IMR-90 (cell line): ENCODE measurements at regions of chr7 and their contacts with region 1.

Region 1: GRCh38 chr7:33904681-33905388 is 504 bp upstream of the BMPER start:
- DNase-seq: peak; percentile 59
- ATAC-seq: peak; percentile 82
- H3K4me3 ChIP-seq: peak overlapping the region; percentile 70
- H3K27ac ChIP-seq: peak overlapping the region; percentile 74
- H3K4me1 ChIP-seq: peaks cover 4% of the 10 kb centered on the region; the same call in 1 of the 2 replicates
- H3K27me3 ChIP-seq: no peaks in the 10 kb centered on the region
- CTCF ChIP-seq: peak; percentile 36
- POLR2A ChIP-seq: no peak
- RAD21 ChIP-seq: no peak

Region 2: DNA sequence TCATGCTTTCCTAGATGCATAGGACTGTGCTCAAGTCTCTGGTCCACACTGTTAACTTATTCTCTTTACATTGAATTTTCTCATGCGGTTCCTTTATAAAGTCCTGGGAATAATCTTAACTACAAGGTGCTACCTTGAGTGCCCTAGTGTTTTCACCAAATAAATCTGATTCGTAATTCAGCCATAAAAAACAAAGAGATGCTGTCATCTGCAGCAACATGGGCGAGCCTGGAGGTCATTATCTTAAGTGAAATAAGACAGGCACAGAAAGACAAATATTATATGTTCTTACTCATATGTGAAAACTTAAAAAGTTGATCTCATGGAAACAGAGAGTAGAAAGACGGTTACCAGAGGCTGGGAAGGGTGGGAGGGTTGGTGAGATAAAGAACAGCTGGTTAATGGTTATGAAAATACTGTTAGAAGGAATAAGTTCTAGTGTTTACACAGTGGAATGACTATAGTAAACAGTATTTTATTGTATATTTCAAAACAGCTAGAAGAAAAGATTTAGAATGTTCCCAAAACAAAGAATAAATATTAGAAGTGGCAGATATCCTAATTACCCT is 880.6 kb before region 1 on chr7:
- CTCF ChIA-PET with region 1: no interaction called
- POLR2A ChIA-PET with region 1: interaction called, 11 read pairs
- dilution Hi-C with region 1: no loop called
- in situ Hi-C with region 1: no loop called
- intact Hi-C with region 1: no loop called
- DNase-seq: peak; percentile 77
- ATAC-seq: peak; percentile 97
- H3K4me3 ChIP-seq: no peak overlapping the region
- H3K27ac ChIP-seq: peak overlapping the region; percentile 9; the same call in 1 of the 2 replicates
- H3K4me1 ChIP-seq: 0 out of 2 replicates have a peak, but pooled peaks cover 3% of the 10 kb centered on the region
- H3K27me3 ChIP-seq: no peaks in the 10 kb centered on the region
- CTCF ChIP-seq: no peak
- POLR2A ChIP-seq: no peak
- RAD21 ChIP-seq: no peak

Region 3: DNA sequence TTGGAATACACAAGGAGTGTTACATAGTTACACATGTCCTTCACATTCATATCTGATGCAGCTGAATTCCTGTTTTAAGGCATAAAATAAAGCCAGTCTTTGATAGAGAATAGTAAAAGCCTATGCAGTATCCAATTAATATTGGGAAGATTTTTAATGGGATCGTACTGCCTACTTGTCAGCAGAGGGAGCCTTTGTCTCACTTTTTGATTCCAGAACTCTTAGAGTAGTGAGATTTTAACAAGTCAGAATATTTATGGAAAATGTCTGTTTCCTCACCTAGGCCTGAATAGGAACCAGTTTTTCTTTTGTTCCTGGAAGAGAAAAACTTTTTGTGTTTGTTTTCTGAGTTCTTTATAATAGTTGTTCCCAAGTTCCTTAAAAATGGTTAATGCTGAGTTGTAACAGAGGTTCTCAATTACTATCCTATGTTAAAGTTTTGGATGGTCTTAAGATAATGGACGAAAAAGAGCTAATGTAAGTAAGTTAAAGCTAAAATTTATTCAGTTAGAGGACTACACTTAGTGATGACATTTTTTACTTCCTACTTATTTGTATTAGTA is 661.4 kb before region 1 on chr7:
- CTCF ChIA-PET with region 1: interaction called, 4 read pairs
- POLR2A ChIA-PET with region 1: no interaction called
- dilution Hi-C with region 1: no loop called
- in situ Hi-C with region 1: no loop called
- intact Hi-C with region 1: loop called (anchors 2 kb)
- DNase-seq: peak; percentile 70
- ATAC-seq: peak; percentile 93
- H3K4me3 ChIP-seq: no peak overlapping the region
- H3K27ac ChIP-seq: no peak overlapping the region
- H3K4me1 ChIP-seq: no peaks in the 10 kb centered on the region
- H3K27me3 ChIP-seq: no peaks in the 10 kb centered on the region
- CTCF ChIP-seq: peak; percentile 85
- POLR2A ChIP-seq: no peak
- RAD21 ChIP-seq: peak; percentile 88

Region 4: GRCh38 chr7:33459340-33459751 is 445.5 kb before region 1 on chr7:
- CTCF ChIA-PET with region 1: interaction called, 3 read pairs
- POLR2A ChIA-PET with region 1: no interaction called
- dilution Hi-C with region 1: no loop called
- in situ Hi-C with region 1: no loop called
- intact Hi-C with region 1: loop called (anchors 1 kb)
- DNase-seq: peak; percentile 66
- ATAC-seq: peak; percentile 99
- H3K4me3 ChIP-seq: no peak overlapping the region
- H3K27ac ChIP-seq: no peak overlapping the region
- H3K4me1 ChIP-seq: no peaks in the 10 kb centered on the region
- H3K27me3 ChIP-seq: no peaks in the 10 kb centered on the region
- CTCF ChIP-seq: peak; percentile 54
- POLR2A ChIP-seq: no peak
- RAD21 ChIP-seq: peak; percentile 64

Region 5: GRCh38 chr7:33612442-33612841 is 292.4 kb before region 1 on chr7:
- CTCF ChIA-PET with region 1: no interaction called
- POLR2A ChIA-PET with region 1: no interaction called
- dilution Hi-C with region 1: no loop called
- in situ Hi-C with region 1: no loop called
- intact Hi-C with region 1: no loop called
- DNase-seq: no peak
- ATAC-seq: no peak
- H3K4me3 ChIP-seq: no peak overlapping the region
- H3K27ac ChIP-seq: no peak overlapping the region
- H3K4me1 ChIP-seq: peaks cover 4% of the 10 kb centered on the region
- H3K27me3 ChIP-seq: no peaks in the 10 kb centered on the region
- CTCF ChIP-seq: no peak
- POLR2A ChIP-seq: no peak
- RAD21 ChIP-seq: no peak

Region 6: DNA sequence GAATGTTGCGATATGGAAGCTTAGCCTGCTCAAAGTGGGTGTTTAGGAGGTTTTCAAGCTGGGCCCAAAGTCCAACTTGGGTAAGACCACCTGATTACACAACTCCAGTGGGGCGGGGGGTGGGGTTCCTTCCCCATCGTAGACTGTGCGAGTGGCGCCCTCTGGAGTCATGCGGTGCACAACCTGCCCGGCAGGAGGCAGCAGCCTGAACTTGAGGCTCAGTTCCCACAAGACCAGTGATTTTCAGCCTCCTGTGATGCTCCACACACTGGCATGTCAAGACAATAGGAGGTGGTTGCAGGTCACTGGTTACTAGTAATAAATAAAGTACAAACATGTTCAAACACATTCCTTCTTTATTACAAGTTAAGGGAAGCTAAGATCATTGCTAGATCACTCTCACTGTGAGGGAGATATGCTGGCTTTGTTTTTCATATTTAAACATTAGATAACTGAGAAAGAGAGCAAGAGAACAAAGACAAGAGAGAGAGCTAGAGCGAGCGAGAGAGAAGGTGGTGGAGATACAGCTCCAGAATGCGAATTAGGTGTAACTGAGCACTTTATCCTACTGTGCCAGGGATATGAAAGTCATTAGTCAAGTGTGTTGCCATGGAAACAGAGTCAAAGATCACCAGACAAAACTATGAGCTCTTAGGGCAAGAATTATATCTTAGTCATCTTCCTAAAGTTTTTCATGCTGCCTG is 96.9 kb before region 1 on chr7:
- CTCF ChIA-PET with region 1: interaction called, 3 read pairs
- POLR2A ChIA-PET with region 1: interaction called, 5 read pairs
- dilution Hi-C with region 1: no loop called
- in situ Hi-C with region 1: no loop called
- intact Hi-C with region 1: loop called (anchors 5 kb)
- DNase-seq: peak; percentile 74
- ATAC-seq: peak; percentile 31
- H3K4me3 ChIP-seq: no peak overlapping the region
- H3K27ac ChIP-seq: no peak overlapping the region
- H3K4me1 ChIP-seq: peaks cover 12% of the 10 kb centered on the region
- H3K27me3 ChIP-seq: no peaks in the 10 kb centered on the region; the same call in 1 of the 2 replicates
- CTCF ChIP-seq: peak; percentile 50
- POLR2A ChIP-seq: no peak
- RAD21 ChIP-seq: peak; percentile 45

Region 7: DNA sequence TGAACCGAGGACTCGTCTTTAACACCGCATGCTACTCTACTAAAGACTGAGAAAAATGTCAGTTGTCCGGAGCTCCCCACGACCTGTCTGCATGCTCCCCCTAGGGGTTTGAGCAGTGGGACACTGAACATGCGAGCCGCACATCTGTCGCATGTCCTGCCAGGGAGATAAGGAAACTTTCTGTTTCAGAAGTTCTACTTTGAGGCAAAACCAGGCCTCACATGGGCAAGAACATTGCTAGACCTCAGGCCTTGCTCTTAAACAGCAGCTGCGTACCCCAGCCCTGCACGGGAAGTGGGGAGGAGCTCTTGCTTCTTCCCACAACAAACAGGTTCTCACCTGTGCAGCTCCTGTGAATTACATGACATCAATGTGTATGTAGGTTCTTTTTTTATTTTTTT is 1820.4 kb after region 1 on chr7:
- CTCF ChIA-PET with region 1: no interaction called
- POLR2A ChIA-PET with region 1: interaction called, 17 read pairs
- dilution Hi-C with region 1: no loop called
- in situ Hi-C with region 1: no loop called
- intact Hi-C with region 1: no loop called
- DNase-seq: no peak
- ATAC-seq: no peak
- H3K4me3 ChIP-seq: no peak overlapping the region
- H3K27ac ChIP-seq: no peak overlapping the region
- H3K4me1 ChIP-seq: peaks cover 2% of the 10 kb centered on the region; the same call in 1 of the 2 replicates
- H3K27me3 ChIP-seq: peaks cover 5% of the 10 kb centered on the region
- CTCF ChIP-seq: no peak
- POLR2A ChIP-seq: no peak
- RAD21 ChIP-seq: no peak